HepG2 (cell line): ENCODE measurements at regions of chr3 and their contacts with region 1.

Region 1: GRCh38 chr3:132722164-132723024 is at the start of gene NPHP3:
- DNase-seq: peak; percentile 84
- ATAC-seq: peak; percentile 91
- H3K4me3 ChIP-seq: peak within 1 kb of the TSS; percentile 86 to 90 (median 89)
- H3K27ac ChIP-seq: peak within 1 kb of the TSS; percentile 85
- H3K4me1 ChIP-seq: peaks cover 35% of the 10 kb centered on the region
- H3K27me3 ChIP-seq: no peaks in the 10 kb centered on the region
- CTCF ChIP-seq: peak; percentile 15; the same call in 1 of the 2 replicates
- EP300 ChIP-seq: no peak
- POLR2A ChIP-seq: peak; percentile 77 to 96
- RAD21 ChIP-seq: no peak
- total RNA-seq, gene NPHP3: 8.4 and 11.0 TPM in 2 replicates

Region 2: GRCh38 chr3:132029182-132029902 is 693.1 kb before region 1 on chr3:
- CTCF ChIA-PET with region 1: no interaction called
- POLR2A ChIA-PET with region 1: no interaction called
- in situ Hi-C with region 1: no loop called
- intact Hi-C with region 1: no loop called
- DNase-seq: peak; percentile 53
- ATAC-seq: peak; percentile 99
- H3K4me3 ChIP-seq: no peak overlapping the region
- H3K27ac ChIP-seq: no peak overlapping the region
- H3K4me1 ChIP-seq: no peaks in the 10 kb centered on the region
- H3K27me3 ChIP-seq: peaks cover 0 to 5% of the 10 kb centered on the region in 2 experiments; a peak in 1 of 5 replicates
- CTCF ChIP-seq: peak; percentile 90
- EP300 ChIP-seq: no peak
- POLR2A ChIP-seq: no peak
- RAD21 ChIP-seq: peak; percentile 68

Region 3: GRCh38 chr3:132659365-132660051 is 62.9 kb before region 1 on chr3 and contains the start of gene ACAD11:
- CTCF ChIA-PET with region 1: no interaction called
- POLR2A ChIA-PET with region 1: interaction called, 5 read pairs
- in situ Hi-C with region 1: no loop called
- intact Hi-C with region 1: loop called (anchors 2 kb)
- DNase-seq: peak; percentile 57
- ATAC-seq: peak; percentile 91
- H3K4me3 ChIP-seq: peak within 1 kb of the TSS; percentile 89 to 100 (median 96)
- H3K27ac ChIP-seq: peak within 1 kb of the TSS; percentile 88
- H3K4me1 ChIP-seq: peaks cover 51% of the 10 kb centered on the region
- H3K27me3 ChIP-seq: no peaks in the 10 kb centered on the region
- CTCF ChIP-seq: peak; percentile 70
- EP300 ChIP-seq: no peak; a peak in 1 of 4 replicates
- POLR2A ChIP-seq: peak; percentile 72 to 84
- RAD21 ChIP-seq: no peak
- total RNA-seq, gene ACAD11: 30.0 and 30.6 TPM in 2 replicates

Region 4: DNA sequence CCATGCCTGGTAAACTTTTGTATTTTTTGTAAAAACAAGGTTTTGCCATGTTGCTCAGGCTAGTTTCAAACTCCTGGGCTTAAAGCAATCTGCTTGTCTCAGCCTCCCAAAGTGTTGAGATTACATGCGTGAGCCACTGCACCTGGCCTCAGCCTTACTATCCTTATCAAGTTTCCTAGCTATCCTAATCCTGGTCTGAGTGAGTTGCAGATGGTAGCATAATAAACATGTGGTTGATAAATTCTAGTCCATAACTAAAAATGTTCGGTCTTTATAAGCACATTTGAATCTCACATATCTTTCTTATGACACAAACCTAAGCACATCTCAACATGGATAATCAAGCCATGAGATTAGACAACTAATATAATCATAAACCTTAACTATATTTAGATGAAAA is 18.7 kb before region 1 on chr3:
- CTCF ChIA-PET with region 1: no interaction called
- POLR2A ChIA-PET with region 1: no interaction called
- in situ Hi-C with region 1: no loop called
- intact Hi-C with region 1: no loop called
- DNase-seq: no peak
- ATAC-seq: no peak
- H3K4me3 ChIP-seq: no peak overlapping the region
- H3K27ac ChIP-seq: no peak overlapping the region
- H3K4me1 ChIP-seq: no peaks in the 10 kb centered on the region
- H3K27me3 ChIP-seq: no peaks in the 10 kb centered on the region
- CTCF ChIP-seq: no peak
- EP300 ChIP-seq: no peak
- POLR2A ChIP-seq: no peak
- RAD21 ChIP-seq: no peak

Region 5: DNA sequence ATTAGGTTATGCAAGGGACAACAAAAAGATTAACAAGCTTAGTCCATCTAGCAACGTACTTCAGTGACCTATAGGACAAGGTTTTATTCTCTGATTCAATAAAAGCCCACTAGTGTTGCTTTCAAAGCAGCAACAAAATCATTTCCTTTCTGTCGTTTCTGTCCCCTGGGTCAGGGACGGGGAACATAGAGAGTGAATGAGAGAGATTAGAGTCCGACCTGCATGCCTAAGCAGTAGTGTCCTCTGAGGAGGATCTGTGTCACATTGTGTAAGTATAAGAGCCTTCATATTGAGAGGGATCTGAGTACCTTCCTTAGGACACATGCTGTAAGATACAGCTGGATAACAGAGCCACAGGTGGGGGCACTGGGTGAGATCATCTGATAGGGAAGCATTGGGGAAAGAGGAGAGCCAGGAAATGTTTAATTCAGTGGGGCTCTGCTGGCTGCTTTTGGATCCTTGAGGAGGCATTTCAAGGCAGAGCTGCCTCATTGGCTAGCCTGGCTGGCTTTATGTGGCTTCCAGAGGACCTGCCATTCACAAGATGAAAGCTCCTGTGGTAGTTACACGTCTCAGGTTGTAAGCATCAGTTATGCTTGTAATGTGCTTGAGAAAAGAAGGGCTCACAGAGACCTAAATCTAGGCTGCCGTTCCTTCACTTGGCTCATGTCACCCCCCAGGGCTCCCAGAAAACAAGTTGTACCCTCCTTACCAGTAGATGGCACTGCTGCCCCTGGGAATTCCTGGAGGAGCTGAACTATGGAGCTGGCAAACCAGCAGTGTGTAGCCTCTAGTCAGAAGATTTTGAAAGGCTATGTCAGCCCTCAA is 318.5 kb after region 1 on chr3:
- CTCF ChIA-PET with region 1: no interaction called
- POLR2A ChIA-PET with region 1: no interaction called
- in situ Hi-C with region 1: no loop called
- intact Hi-C with region 1: loop called (anchors 1 kb)
- DNase-seq: peak; percentile 58
- ATAC-seq: peak; percentile 95
- H3K4me3 ChIP-seq: no peak overlapping the region
- H3K27ac ChIP-seq: no peak overlapping the region
- H3K4me1 ChIP-seq: no peaks in the 10 kb centered on the region
- H3K27me3 ChIP-seq: peaks cover 0 to 25% of the 10 kb centered on the region in 2 experiments; a peak in 3 of 5 replicates
- CTCF ChIP-seq: peak; percentile 84
- EP300 ChIP-seq: no peak
- POLR2A ChIP-seq: no peak
- RAD21 ChIP-seq: peak; percentile 68; the same call in 1 of the 2 replicates

Region 6: DNA sequence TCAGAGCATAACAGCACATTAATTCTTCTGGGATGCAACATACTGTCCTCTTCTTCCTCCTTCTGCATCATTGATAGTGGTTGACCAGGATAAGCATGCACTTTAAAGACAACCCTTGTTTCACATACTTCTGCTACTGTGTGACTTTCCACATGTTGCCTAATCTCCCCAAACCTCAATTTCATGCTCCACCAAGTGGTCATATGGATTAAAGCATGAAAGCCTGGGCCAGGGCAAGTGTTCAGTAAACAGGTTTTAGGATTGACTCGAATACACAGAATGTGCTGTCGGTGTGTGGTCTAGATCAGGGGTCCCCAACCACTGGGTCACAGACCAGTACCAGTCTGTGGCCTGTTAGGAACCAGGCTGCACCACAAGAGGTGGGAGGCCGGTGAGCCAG is 655.0 kb after region 1 on chr3:
- CTCF ChIA-PET with region 1: interaction called, 3 read pairs
- POLR2A ChIA-PET with region 1: no interaction called
- in situ Hi-C with region 1: no loop called
- intact Hi-C with region 1: loop called (anchors 1 kb)
- DNase-seq: peak; percentile 28
- ATAC-seq: peak; percentile 73
- H3K4me3 ChIP-seq: no peak overlapping the region
- H3K27ac ChIP-seq: no peak overlapping the region
- H3K4me1 ChIP-seq: peaks cover 13% of the 10 kb centered on the region
- H3K27me3 ChIP-seq: no peaks in the 10 kb centered on the region; a peak in 2 of 5 replicates
- CTCF ChIP-seq: peak; percentile 59
- EP300 ChIP-seq: no peak
- POLR2A ChIP-seq: no peak
- RAD21 ChIP-seq: 0 out of 2 replicates have a peak, but pooled peaks have one; percentile 23